ENCODE measurements at regions of chr17 and their contacts with region 1.

Region 1: DNA sequence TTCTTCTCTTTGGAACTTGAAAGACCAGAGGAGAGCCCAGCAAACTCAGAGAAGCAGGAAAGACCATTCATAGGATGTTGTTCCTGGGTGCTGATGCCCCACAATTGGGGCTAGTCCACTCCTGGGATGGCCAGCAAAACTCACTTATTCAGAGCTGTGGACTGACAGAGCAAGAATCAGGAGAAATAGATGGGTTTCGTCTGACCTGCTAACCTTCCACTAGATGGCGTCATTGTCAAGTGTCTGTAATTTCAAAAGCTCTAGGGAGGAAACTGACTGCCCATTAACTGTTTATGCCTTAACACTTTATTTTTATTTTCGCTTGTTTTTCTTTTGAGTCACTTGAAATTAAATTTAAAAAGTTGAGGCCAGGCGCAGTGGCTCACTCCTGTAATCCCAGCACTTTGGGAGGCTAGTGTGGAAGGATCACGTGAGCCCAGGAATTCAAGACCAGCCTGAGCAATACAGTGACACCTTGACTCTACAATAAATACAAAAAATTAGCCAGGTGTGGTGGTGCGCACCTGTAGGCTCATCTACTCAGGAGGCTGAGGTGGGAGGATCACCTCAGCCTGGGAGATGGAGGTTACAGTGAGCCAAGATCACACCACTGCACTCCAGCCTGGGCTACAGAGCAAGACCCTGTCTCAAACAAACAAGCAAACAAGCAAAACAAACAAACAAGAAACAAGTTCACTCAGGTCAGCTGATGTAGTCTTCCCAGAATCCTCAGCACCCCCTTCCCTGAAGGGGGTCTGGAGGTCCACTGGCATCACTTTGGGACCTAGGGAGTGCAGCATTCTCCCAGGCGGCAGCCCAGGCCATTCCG is 28.6 kb upstream of the MILR1 start:
- DNase-seq: peak; percentile 13
- H3K4me3 Mint-ChIP-seq: no peak overlapping the region
- H3K27ac Mint-ChIP-seq: no peak overlapping the region
- H3K4me1 Mint-ChIP-seq: peaks cover 6% of the 10 kb centered on the region
- H3K27me3 Mint-ChIP-seq: no peaks in the 10 kb centered on the region
- CTCF ChIP-seq: peak; percentile 34

Region 2: DNA sequence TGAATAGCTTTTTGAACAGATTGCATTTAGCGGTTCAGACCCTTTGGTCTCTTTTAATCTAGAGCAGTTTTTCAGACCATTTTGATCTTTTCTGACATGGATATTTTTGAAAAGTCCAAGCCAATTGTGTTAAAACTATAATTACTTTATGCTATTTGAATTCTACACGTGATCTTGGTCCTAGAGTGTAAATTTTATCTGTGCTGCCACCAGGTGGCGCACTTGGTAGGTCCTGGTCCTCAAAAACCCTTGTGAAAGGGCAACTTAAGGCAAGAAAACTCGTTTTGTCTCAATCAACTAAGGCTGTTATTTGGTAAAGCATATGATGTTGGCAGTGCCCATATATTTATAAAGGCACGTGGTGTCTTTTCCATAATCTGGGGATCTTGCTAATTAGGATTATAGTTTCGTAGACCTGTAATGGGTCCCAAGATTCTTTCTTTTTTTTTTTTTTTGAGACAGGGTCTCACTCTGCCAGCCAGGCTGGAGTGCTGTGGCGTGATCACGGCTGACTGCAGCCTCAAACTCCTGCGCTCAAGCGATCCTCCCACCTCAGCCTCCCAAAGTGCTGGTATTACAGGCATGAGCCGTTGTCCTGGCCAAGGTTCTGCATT is 113.4 kb before region 1 on chr17:
- CTCF ChIA-PET with region 1: interaction called, 7 read pairs
- intact Hi-C with region 1: loop called (anchors 2 kb)
- DNase-seq: peak; percentile 59
- H3K4me3 Mint-ChIP-seq: no peak overlapping the region
- H3K27ac Mint-ChIP-seq: no peak overlapping the region
- H3K4me1 Mint-ChIP-seq: no peaks in the 10 kb centered on the region
- H3K27me3 Mint-ChIP-seq: no peaks in the 10 kb centered on the region
- CTCF ChIP-seq: peak; percentile 28

Region 3: GRCh38 chr17:64320613-64321553 is 99.5 kb before region 1 on chr17:
- CTCF ChIA-PET with region 1: interaction called, 11 read pairs
- intact Hi-C with region 1: loop called (anchors 1 kb)
- DNase-seq: peak; percentile 55
- H3K4me3 Mint-ChIP-seq: no peak overlapping the region
- H3K27ac Mint-ChIP-seq: no peak overlapping the region
- H3K4me1 Mint-ChIP-seq: no peaks in the 10 kb centered on the region
- H3K27me3 Mint-ChIP-seq: peaks cover 19% of the 10 kb centered on the region
- CTCF ChIP-seq: peak; percentile 48

Region 4: GRCh38 chr17:64357191-64357981 is 63.0 kb before region 1 on chr17:
- CTCF ChIA-PET with region 1: no interaction called
- intact Hi-C with region 1: no loop called
- DNase-seq: no peak
- H3K4me3 Mint-ChIP-seq: no peak overlapping the region
- H3K27ac Mint-ChIP-seq: no peak overlapping the region
- H3K4me1 Mint-ChIP-seq: no peaks in the 10 kb centered on the region
- H3K27me3 Mint-ChIP-seq: peaks cover 17% of the 10 kb centered on the region
- CTCF ChIP-seq: no peak

Region 5: GRCh38 chr17:64491034-64491859 is 70.9 kb after region 1 on chr17:
- CTCF ChIA-PET with region 1: interaction called, 32 read pairs
- intact Hi-C with region 1: loop called (anchors 1 kb)
- DNase-seq: peak; percentile 52
- H3K4me3 Mint-ChIP-seq: no peak overlapping the region
- H3K27ac Mint-ChIP-seq: no peak overlapping the region
- H3K4me1 Mint-ChIP-seq: peaks cover 8% of the 10 kb centered on the region
- H3K27me3 Mint-ChIP-seq: no peaks in the 10 kb centered on the region
- CTCF ChIP-seq: peak; percentile 34